ENCODE measurements at regions of chr9 and their contacts with region 1.

Region 1: DNA sequence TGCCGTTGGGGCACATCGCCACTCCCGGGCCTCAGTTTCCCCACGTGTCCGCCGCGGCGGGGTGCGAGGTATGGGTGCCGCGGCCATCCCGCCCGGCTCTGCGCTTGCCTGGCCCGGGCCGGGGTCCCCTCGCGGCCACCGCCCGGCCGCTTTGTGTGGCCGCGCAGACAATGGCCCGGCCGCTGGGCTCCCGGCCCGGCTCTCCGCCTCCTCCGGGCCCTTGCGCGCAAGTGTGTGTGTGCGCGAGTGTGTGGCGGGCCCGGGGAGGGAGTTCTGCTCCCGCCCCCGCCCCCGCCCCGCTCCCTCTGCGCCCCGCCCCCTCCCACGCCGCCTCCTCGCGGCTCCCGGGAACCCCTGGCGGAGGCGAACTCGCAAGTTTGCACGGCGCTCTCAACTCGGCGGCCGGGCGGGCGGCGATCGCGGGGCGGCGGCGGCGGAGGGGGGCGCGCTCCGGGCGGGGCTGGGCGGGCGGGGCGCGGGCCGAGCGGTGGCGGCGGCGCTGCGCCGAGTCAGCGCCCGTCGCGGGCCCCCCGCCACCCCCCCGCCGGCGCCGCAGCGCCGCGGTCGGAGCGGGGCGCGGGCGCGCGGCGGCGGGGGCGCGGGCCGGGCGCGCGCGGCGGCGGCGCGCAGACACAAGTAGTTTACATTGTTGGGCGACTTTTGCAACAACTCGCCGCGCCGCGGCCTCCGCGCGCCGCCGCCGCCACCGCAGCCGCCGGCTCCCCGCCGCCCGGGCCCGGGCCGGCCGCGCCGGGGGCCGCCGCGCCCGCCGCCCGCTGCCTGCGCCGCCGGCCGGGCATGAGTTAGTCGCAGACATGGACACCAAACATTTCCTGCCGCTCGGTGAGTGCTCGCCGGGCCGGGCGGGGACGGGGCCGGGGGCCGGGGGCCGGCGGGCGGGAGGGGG is at the start of gene RXRA:
- DNase-seq: peak; percentile 82
- H3K4me3 Mint-ChIP-seq: peak within 1 kb of the TSS; percentile 81
- H3K27ac Mint-ChIP-seq: peak within 1 kb of the TSS; percentile 61
- H3K4me1 Mint-ChIP-seq: peaks cover 43% of the 10 kb centered on the region
- H3K27me3 Mint-ChIP-seq: no peaks in the 10 kb centered on the region
- CTCF ChIP-seq: peak; percentile 16
- total RNA-seq, gene RXRA: 57.7 and 65.5 TPM in 2 replicates

Region 2: GRCh38 chr9:134163353-134164196 is 162.5 kb before region 1 on chr9:
- CTCF ChIA-PET with region 1: interaction called, 3 read pairs
- POLR2A ChIA-PET with region 1: interaction called, 29 read pairs
- intact Hi-C with region 1: no loop called
- DNase-seq: no peak
- H3K4me3 Mint-ChIP-seq: peak overlapping the region; percentile 25
- H3K27ac Mint-ChIP-seq: no peak overlapping the region
- H3K4me1 Mint-ChIP-seq: peaks cover 6% of the 10 kb centered on the region
- H3K27me3 Mint-ChIP-seq: no peaks in the 10 kb centered on the region
- CTCF ChIP-seq: no peak

Region 3: GRCh38 chr9:134178768-134179551 is 147.1 kb before region 1 on chr9:
- CTCF ChIA-PET with region 1: interaction called, 3 read pairs
- POLR2A ChIA-PET with region 1: no interaction called
- intact Hi-C with region 1: loop called (anchors 5 kb)
- DNase-seq: no peak
- H3K4me3 Mint-ChIP-seq: no peak overlapping the region
- H3K27ac Mint-ChIP-seq: no peak overlapping the region
- H3K4me1 Mint-ChIP-seq: no peaks in the 10 kb centered on the region
- H3K27me3 Mint-ChIP-seq: peaks cover 54% of the 10 kb centered on the region
- CTCF ChIP-seq: no peak

Region 4: DNA sequence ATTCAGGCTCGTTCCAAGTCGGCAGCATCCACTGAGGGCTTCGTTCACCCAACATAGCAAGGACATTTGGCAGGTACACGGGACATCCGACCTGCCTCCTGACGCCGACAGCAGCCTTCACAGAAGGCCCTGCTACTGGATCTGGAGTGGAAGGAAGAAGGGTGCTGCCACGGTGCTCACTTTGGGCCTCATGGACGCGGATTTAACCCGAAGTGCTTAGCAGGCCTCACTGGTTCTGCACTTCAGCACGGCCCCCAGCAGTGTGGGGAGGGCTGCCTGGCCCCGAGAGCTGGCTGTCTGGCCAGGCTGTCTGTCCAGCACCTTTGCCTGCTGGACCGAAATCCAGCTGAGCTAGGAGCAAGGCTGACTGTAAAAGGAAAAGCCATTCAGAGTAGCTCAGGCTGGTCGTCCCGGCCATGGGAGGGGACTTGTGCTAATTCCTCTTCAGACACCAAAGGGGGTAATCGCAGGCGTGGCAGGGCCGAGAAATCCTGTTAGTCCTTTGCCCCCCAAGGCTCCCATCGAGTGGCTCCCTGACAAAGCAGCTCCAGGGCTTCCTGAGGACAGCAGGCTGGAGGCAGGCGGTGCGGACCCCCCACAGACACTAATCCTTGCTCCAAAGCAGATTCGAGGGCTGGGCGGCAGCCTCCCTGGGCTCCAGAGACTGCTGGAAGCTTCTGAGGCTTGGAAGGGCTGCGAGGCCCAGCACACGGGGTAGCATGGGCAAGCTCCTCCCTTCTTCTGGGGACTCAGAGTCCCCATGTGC is 10.9 kb before region 1 on chr9:
- CTCF ChIA-PET with region 1: no interaction called
- POLR2A ChIA-PET with region 1: no interaction called
- intact Hi-C with region 1: no loop called
- DNase-seq: no peak
- H3K4me3 Mint-ChIP-seq: no peak overlapping the region
- H3K27ac Mint-ChIP-seq: no peak overlapping the region
- H3K4me1 Mint-ChIP-seq: no peaks in the 10 kb centered on the region
- H3K27me3 Mint-ChIP-seq: peaks cover 13% of the 10 kb centered on the region
- CTCF ChIP-seq: no peak

Region 5: GRCh38 chr9:134365791-134366688 is 40.0 kb after region 1 on chr9:
- CTCF ChIA-PET with region 1: interaction called, 5 read pairs
- POLR2A ChIA-PET with region 1: interaction called, 34 read pairs
- intact Hi-C with region 1: no loop called
- DNase-seq: peak; percentile 95
- H3K4me3 Mint-ChIP-seq: peak overlapping the region; percentile 38
- H3K27ac Mint-ChIP-seq: peak overlapping the region; percentile 69
- H3K4me1 Mint-ChIP-seq: peaks cover 35% of the 10 kb centered on the region
- H3K27me3 Mint-ChIP-seq: no peaks in the 10 kb centered on the region
- CTCF ChIP-seq: no peak

Region 6: GRCh38 chr9:134434894-134435506 is 108.9 kb after region 1 on chr9:
- CTCF ChIA-PET with region 1: interaction called, 5 read pairs
- POLR2A ChIA-PET with region 1: interaction called, 22 read pairs
- intact Hi-C with region 1: no loop called
- DNase-seq: peak; percentile 97
- H3K4me3 Mint-ChIP-seq: peak overlapping the region; percentile 33
- H3K27ac Mint-ChIP-seq: peak overlapping the region; percentile 65
- H3K4me1 Mint-ChIP-seq: peaks cover 30% of the 10 kb centered on the region
- H3K27me3 Mint-ChIP-seq: no peaks in the 10 kb centered on the region
- CTCF ChIP-seq: no peak